Calu3 (cell line): ENCODE measurements at regions of chr1 and their contacts with region 1.

Region 1: GRCh38 chr1:9289090-9289534 is 3.6 kb upstream of the SPSB1 start:
- DNase-seq: peak; percentile 65
- H3K4me3 Mint-ChIP-seq: no peak overlapping the region
- H3K27ac Mint-ChIP-seq: no peak overlapping the region
- H3K4me1 Mint-ChIP-seq: no peaks in the 10 kb centered on the region
- H3K27me3 Mint-ChIP-seq: no peaks in the 10 kb centered on the region
- CTCF ChIP-seq: peak; percentile 79

Region 2: GRCh38 chr1:9455487-9456234 is 166.5 kb after region 1 on chr1:
- CTCF ChIA-PET with region 1: interaction called, 3 read pairs
- intact Hi-C with region 1: loop called (anchors 1 kb)
- DNase-seq: peak; percentile 50
- H3K4me3 Mint-ChIP-seq: no peak overlapping the region
- H3K27ac Mint-ChIP-seq: no peak overlapping the region
- H3K4me1 Mint-ChIP-seq: no peaks in the 10 kb centered on the region
- H3K27me3 Mint-ChIP-seq: peaks cover 28% of the 10 kb centered on the region
- CTCF ChIP-seq: peak; percentile 45

Region 3: DNA sequence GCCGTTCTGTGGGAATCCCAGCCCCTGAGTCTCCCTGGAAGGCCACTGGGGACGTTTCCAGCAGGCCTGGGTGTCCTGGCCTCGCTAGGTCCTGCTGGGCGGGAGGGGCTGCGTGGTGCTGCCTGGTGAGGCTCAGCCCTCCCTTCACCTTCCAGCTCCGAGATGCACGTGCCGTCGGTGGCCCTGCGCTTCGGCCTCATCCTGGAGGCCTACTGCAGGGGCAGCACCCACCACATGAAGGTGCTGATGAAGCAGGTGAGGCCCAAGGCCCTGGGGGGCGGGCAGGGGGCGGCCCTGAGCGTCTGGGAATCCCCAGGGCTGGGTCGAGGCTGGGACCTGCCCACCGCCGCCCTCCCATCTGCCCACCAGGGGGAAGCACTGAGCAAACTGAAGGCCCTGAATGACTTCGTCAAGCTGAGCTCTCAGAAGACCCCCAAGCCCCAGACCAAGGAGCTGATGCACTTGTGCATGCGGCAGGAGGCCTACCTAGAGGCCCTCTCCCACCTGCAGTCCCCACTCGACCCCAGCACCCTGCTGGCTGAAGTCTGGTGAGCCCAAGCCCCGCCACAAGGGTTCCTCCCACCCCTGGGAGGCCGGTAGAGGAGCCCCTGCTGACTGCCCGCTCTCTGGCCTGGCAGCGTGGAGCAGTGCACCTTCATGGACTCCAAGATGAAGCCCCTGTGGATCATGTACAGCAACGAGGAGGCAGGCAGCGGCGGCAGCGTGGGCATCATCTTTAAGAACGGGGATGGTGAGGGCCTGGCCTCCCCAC is 432.7 kb after region 1 on chr1:
- CTCF ChIA-PET with region 1: no interaction called
- intact Hi-C with region 1: no loop called
- DNase-seq: peak; percentile 50
- H3K4me3 Mint-ChIP-seq: no peak overlapping the region
- H3K27ac Mint-ChIP-seq: no peak overlapping the region
- H3K4me1 Mint-ChIP-seq: no peaks in the 10 kb centered on the region
- H3K27me3 Mint-ChIP-seq: no peaks in the 10 kb centered on the region
- CTCF ChIP-seq: peak; percentile 41